CD4-positive, alpha-beta T cell (primary cell): ENCODE measurements at regions of chr9 and their contacts with region 1.

Region 1: GRCh38 chr9:71768388-71769174 is at the start of gene CEMIP2:
- DNase-seq: peak; percentile 82 to 94 (median 87)
- ATAC-seq: peak; percentile 78
- H3K4me3 ChIP-seq: peak within 1 kb of the TSS; percentile 72
- H3K4me3 Mint-ChIP-seq: peak within 1 kb of the TSS; percentile 98
- H3K27ac ChIP-seq: peak within 1 kb of the TSS; percentile 89
- H3K27ac Mint-ChIP-seq: peak within 1 kb of the TSS; percentile 99
- H3K4me1 ChIP-seq: peaks cover 36% of the 10 kb centered on the region
- H3K4me1 Mint-ChIP-seq: peaks cover 46% of the 10 kb centered on the region
- H3K27me3 ChIP-seq: no peaks in the 10 kb centered on the region
- H3K27me3 Mint-ChIP-seq: no peaks in the 10 kb centered on the region
- CTCF ChIP-seq: peak; percentile 58
- total RNA-seq, gene CEMIP2: 301 to 305 TPM

Region 2: DNA sequence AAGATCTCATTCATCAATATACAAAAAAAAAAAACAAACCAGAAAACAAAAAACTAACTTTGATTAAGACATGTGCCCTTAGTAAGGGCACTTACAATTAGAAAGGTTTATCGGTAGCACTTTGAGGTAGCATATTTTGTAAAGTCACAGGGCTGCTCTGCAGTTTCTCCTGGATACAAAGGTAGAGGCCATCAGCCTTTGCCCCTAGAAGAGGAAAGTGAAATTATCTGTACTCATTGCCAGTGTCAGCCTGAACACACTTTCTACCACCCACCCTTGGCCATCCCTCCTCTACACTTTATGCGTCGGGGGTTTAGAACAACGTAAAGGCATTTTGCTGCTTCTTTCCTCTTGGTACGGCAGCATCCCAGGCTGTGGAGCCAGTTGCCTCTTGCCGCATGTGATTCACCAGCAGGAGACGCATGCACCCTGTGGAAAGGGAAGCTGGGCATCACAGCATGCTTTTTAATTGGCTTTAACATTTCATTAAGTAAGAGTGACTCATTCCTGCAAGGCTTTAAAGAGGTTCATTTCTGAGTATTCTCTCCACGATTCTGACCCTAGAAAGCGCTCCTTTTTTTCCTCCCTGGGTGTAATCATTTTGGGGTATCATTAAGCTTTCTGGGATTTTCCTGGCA is 84.9 kb before region 1 on chr9:
- CTCF ChIA-PET with region 1: interaction called, 7 read pairs
- POLR2A ChIA-PET with region 1: interaction called, 21 read pairs
- intact Hi-C with region 1: no loop called
- DNase-seq: peak in 3 of 14 experiments; percentile 29 to 61 (median 46)
- ATAC-seq: no peak
- H3K4me3 ChIP-seq: no peak overlapping the region
- H3K4me3 Mint-ChIP-seq: peak overlapping the region; percentile 42
- H3K27ac ChIP-seq: no peak overlapping the region
- H3K27ac Mint-ChIP-seq: peak overlapping the region; percentile 48
- H3K4me1 ChIP-seq: peaks cover 39% of the 10 kb centered on the region
- H3K4me1 Mint-ChIP-seq: peaks cover 67% of the 10 kb centered on the region
- H3K27me3 ChIP-seq: no peaks in the 10 kb centered on the region
- H3K27me3 Mint-ChIP-seq: no peaks in the 10 kb centered on the region
- CTCF ChIP-seq: no peak

Region 3: GRCh38 chr9:71748280-71748743 is 20.3 kb before region 1 on chr9:
- CTCF ChIA-PET with region 1: interaction called, 5 read pairs
- POLR2A ChIA-PET with region 1: interaction called, 21 read pairs
- intact Hi-C with region 1: no loop called
- DNase-seq: no peak
- ATAC-seq: no peak
- H3K4me3 ChIP-seq: no peak overlapping the region
- H3K4me3 Mint-ChIP-seq: no peak overlapping the region
- H3K27ac ChIP-seq: peak overlapping the region in 1 of 2 donors; percentile 1
- H3K27ac Mint-ChIP-seq: peak overlapping the region; percentile 28
- H3K4me1 ChIP-seq: peaks cover 4% of the 10 kb centered on the region
- H3K4me1 Mint-ChIP-seq: peaks cover 58% of the 10 kb centered on the region
- H3K27me3 ChIP-seq: no peaks in the 10 kb centered on the region
- H3K27me3 Mint-ChIP-seq: no peaks in the 10 kb centered on the region
- CTCF ChIP-seq: no peak

Region 4: GRCh38 chr9:71806901-71807307 is 38.3 kb after region 1 on chr9:
- CTCF ChIA-PET with region 1: interaction called, 11 read pairs
- POLR2A ChIA-PET with region 1: interaction called, 4 read pairs
- intact Hi-C with region 1: no loop called
- DNase-seq: peak; percentile 31 to 81 (median 46)
- ATAC-seq: peak; percentile 90
- H3K4me3 ChIP-seq: no peak overlapping the region
- H3K4me3 Mint-ChIP-seq: no peak overlapping the region
- H3K27ac ChIP-seq: no peak overlapping the region
- H3K27ac Mint-ChIP-seq: no peak overlapping the region
- H3K4me1 ChIP-seq: peaks cover 10% of the 10 kb centered on the region
- H3K4me1 Mint-ChIP-seq: peaks cover 14% of the 10 kb centered on the region
- H3K27me3 ChIP-seq: no peaks in the 10 kb centered on the region
- H3K27me3 Mint-ChIP-seq: no peaks in the 10 kb centered on the region
- CTCF ChIP-seq: peak; percentile 90

Region 5: DNA sequence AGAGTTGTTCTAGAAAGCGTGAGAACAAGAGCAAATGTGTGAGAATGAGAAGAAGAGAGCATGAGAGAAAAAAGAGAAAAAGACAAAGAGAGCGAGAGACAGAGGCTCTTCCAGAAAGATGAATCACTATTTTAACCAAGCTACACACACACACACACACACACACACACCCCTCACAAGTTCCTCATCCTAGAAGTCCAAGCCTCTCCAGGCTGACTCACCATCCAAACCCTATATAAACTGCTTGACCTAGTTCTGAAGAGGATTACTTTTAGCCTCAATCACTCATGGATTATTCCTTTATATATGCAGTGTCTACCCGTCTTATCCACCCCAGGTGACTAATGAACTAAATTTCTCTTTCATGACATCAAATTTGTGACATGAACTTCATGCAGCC is 254.3 kb after region 1 on chr9:
- CTCF ChIA-PET with region 1: interaction called, 8 read pairs
- POLR2A ChIA-PET with region 1: interaction called, 3 read pairs
- intact Hi-C with region 1: loop called in 1 of 2 experiments (anchors 2 kb)
- DNase-seq: peak in 2 of 14 experiments; percentile 14 to 39
- ATAC-seq: no peak
- H3K4me3 ChIP-seq: no peak overlapping the region
- H3K4me3 Mint-ChIP-seq: no peak overlapping the region
- H3K27ac ChIP-seq: no peak overlapping the region
- H3K27ac Mint-ChIP-seq: no peak overlapping the region
- H3K4me1 ChIP-seq: peaks cover 4% of the 10 kb centered on the region
- H3K4me1 Mint-ChIP-seq: no peaks in the 10 kb centered on the region
- H3K27me3 ChIP-seq: no peaks in the 10 kb centered on the region
- H3K27me3 Mint-ChIP-seq: no peaks in the 10 kb centered on the region
- CTCF ChIP-seq: no peak